Activated CD8-positive, alpha-beta T cell treated with anti-CD3 and anti-CD28 coated beads for 36 hours (primary cell): ENCODE measurements at regions of chr11 and their contacts with region 1.

Region 1: GRCh38 chr11:269146-269890 is 8.9 kb upstream of the NLRP6 start:
- DNase-seq: peak; percentile 72
- ATAC-seq: peak; percentile 38
- H3K4me3 Mint-ChIP-seq: peak overlapping the region; percentile 89
- H3K27ac Mint-ChIP-seq: peak overlapping the region; percentile 98
- H3K4me1 Mint-ChIP-seq: peaks cover 37% of the 10 kb centered on the region
- H3K27me3 Mint-ChIP-seq: no peaks in the 10 kb centered on the region
- CTCF ChIP-seq: peak; percentile 46

Region 2: GRCh38 chr11:288328-289144 is 19.2 kb after region 1 on chr11 and contains the start of gene PGGHG:
- CTCF ChIA-PET with region 1: interaction called, 4 read pairs
- POLR2A ChIA-PET with region 1: interaction called, 75 read pairs
- intact Hi-C with region 1: no loop called
- DNase-seq: peak; percentile 56
- ATAC-seq: peak; percentile 14
- H3K4me3 Mint-ChIP-seq: peak within 1 kb of the TSS; percentile 97
- H3K27ac Mint-ChIP-seq: peak within 1 kb of the TSS; percentile 98
- H3K4me1 Mint-ChIP-seq: peaks cover 51% of the 10 kb centered on the region
- H3K27me3 Mint-ChIP-seq: no peaks in the 10 kb centered on the region
- CTCF ChIP-seq: no peak
- total RNA-seq, gene PGGHG: 298 to 308 TPM